ENCODE measurements at regions of chr10 and their contacts with region 1.

Region 1: GRCh38 chr10:3668276-3668965 is 116.6 kb downstream of the KLF6 start:
- DNase-seq: peak; percentile 85
- H3K4me3 Mint-ChIP-seq: peak overlapping the region; percentile 67
- H3K27ac Mint-ChIP-seq: peak overlapping the region; percentile 94
- H3K4me1 Mint-ChIP-seq: peaks cover 12% of the 10 kb centered on the region
- H3K27me3 Mint-ChIP-seq: no peaks in the 10 kb centered on the region
- CTCF ChIP-seq: no peak

Region 2: DNA sequence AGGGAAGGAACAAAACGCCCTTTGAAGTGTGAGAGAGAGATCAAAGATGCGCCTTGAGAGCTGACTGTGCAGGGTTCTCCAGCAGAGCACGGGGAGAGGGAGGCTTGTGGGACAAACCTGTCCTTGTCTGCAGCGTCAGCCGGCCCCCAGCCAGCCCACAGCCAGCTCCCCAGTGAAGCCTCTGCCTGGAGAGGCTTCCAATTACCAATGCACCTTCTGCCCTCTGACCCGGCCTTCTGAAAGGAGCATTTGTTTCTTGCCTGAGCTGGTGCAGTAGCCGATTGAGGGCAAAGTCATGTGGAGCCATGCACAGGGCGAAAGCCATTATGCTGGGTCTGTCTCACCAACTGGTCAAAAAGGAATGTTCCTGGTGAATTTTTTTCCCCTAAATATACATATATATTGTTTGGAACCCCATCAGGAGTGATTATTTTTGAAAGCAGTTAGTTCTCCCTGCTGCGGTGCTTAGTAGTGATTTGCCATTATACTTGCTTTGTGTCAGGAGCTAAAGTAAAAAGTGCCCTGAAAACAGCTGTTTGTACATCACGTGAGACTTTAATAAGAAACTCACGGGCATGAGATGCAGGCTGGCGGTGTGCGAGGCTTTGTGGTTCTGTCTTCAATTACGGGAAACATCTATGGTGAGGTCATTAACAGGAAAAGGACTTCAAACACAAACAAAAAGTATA is 152.0 kb before region 1 on chr10:
- CTCF ChIA-PET with region 1: no interaction called
- POLR2A ChIA-PET with region 1: no interaction called
- intact Hi-C with region 1: no loop called
- DNase-seq: no peak
- H3K4me3 Mint-ChIP-seq: no peak overlapping the region
- H3K27ac Mint-ChIP-seq: no peak overlapping the region
- H3K4me1 Mint-ChIP-seq: no peaks in the 10 kb centered on the region
- H3K27me3 Mint-ChIP-seq: no peaks in the 10 kb centered on the region
- CTCF ChIP-seq: no peak

Region 3: GRCh38 chr10:3714531-3714930 is 46.1 kb after region 1 on chr10:
- CTCF ChIA-PET with region 1: no interaction called
- POLR2A ChIA-PET with region 1: no interaction called
- intact Hi-C with region 1: no loop called
- DNase-seq: peak; percentile 61
- H3K4me3 Mint-ChIP-seq: no peak overlapping the region
- H3K27ac Mint-ChIP-seq: no peak overlapping the region
- H3K4me1 Mint-ChIP-seq: peaks cover 5% of the 10 kb centered on the region
- H3K27me3 Mint-ChIP-seq: no peaks in the 10 kb centered on the region
- CTCF ChIP-seq: no peak

Region 4: GRCh38 chr10:3757638-3758490 is 89.4 kb after region 1 on chr10:
- CTCF ChIA-PET with region 1: no interaction called
- POLR2A ChIA-PET with region 1: interaction called, 4 read pairs
- intact Hi-C with region 1: loop called (anchors 10 kb)
- DNase-seq: peak; percentile 91
- H3K4me3 Mint-ChIP-seq: peak overlapping the region; percentile 48
- H3K27ac Mint-ChIP-seq: peak overlapping the region; percentile 62
- H3K4me1 Mint-ChIP-seq: peaks cover 52% of the 10 kb centered on the region
- H3K27me3 Mint-ChIP-seq: no peaks in the 10 kb centered on the region
- CTCF ChIP-seq: no peak

Region 5: DNA sequence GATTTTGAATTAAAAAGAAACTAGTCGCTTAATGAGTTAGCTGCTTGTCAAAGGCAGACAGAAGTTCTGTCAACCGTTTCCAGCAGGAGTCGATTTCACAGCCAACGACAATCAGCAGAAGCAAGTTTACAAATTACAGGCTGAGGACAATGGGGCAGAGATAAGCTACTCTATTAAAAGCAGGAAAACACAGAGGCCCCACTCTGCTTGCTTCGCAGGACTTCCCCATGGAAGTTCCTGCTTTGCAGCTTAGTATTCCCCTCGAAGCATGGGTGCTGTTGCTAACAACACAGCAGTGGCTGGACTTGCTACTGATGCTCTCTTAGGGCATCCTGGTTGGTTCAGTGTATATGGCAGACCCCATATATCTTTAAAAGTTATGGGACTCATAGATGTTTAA is 167.3 kb after region 1 on chr10:
- CTCF ChIA-PET with region 1: no interaction called
- POLR2A ChIA-PET with region 1: no interaction called
- intact Hi-C with region 1: no loop called
- DNase-seq: no peak
- H3K4me3 Mint-ChIP-seq: no peak overlapping the region
- H3K27ac Mint-ChIP-seq: no peak overlapping the region
- H3K4me1 Mint-ChIP-seq: peaks cover 5% of the 10 kb centered on the region
- H3K27me3 Mint-ChIP-seq: no peaks in the 10 kb centered on the region
- CTCF ChIP-seq: no peak